ENCODE measurements at regions of chr14 and their contacts with region 1.

Region 1: GRCh38 chr14:74109369-74109768 is 24.6 kb downstream of the LIN52 start:
- DNase-seq: no peak
- H3K4me3 ChIP-seq: no peak overlapping the region
- H3K27ac ChIP-seq: no peak overlapping the region
- H3K4me1 ChIP-seq: no peaks in the 10 kb centered on the region
- H3K27me3 ChIP-seq: no peaks in the 10 kb centered on the region
- CTCF ChIP-seq: no peak

Region 2: DNA sequence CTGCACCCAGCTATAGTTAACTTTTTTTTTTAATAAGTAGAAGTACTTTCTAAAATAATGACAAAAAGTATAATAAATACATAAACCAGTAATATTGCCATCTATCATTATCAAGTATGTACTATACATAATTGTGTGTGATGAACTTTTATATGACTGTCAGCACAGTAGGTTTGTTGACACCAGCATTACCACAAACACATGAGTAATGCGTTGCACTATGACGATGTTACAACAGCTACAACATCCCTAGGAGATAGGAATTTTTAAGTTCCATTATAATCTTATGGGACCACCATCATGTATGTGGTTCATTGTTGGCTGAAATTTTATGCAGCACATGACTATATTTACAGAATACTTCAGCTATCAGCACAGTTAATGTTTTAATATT is 67.0 kb after region 1 on chr14:
- intact Hi-C with region 1: no loop called
- DNase-seq: no peak
- H3K4me3 ChIP-seq: no peak overlapping the region
- H3K27ac ChIP-seq: no peak overlapping the region
- H3K4me1 ChIP-seq: no peaks in the 10 kb centered on the region
- H3K27me3 ChIP-seq: no peaks in the 10 kb centered on the region
- CTCF ChIP-seq: no peak

Region 3: DNA sequence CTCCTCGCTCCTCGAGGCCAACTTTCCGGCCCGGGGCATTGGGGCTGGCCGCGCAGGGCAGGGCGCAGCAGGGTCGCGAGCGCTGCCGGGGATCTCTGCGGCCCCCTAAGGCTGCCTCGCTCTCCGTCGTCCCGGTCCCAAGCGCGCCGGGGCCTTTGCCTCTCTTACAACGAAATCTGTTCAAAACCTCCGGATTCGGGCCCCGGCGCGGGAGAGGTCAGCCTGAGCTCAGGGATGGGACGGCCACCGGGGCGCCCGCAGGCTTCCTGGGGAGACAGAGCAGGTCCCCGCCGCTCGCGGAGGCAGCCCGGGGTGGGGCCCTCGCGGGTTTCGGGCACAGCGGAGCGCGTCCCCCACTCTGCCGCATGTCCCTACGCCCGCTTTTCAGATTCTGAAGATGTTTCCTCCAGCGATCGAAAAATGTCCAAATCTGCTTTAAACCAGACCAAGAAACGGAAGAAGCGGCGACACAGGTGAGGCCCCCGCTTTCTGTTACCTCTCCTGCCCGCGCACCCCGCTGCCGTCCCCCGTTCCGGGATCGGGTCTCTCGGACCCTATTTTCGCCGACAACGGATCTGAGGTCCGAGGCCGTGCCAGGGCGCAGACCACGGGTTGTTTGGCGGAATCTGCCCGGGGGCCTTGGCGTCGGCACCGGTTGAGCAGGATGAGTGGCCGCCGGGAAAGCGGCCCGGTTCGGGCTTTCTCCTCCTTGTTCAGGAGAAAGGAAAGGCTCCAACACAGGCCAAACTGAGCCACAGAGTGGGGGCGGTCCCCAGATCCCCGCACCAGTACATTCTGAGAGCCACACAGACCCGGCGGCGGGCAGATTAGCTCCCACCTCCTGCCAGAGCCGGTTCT is 131.7 kb after region 1 on chr14:
- intact Hi-C with region 1: loop called (anchors 10 kb)
- DNase-seq: peak in 4 of 5 donors; percentile 52 to 60 (median 56)
- H3K4me3 ChIP-seq: peak overlapping the region in 1 of 3 donors; percentile 25
- H3K27ac ChIP-seq: no peak overlapping the region
- H3K4me1 ChIP-seq: peaks cover 0 to 8% (median 0%) of the 10 kb centered on the region in 3 donors
- H3K27me3 ChIP-seq: peaks cover 45% of the 10 kb centered on the region
- CTCF ChIP-seq: no peak

Region 4: GRCh38 chr14:74349757-74350156 is 240.4 kb after region 1 on chr14:
- intact Hi-C with region 1: no loop called
- DNase-seq: no peak
- H3K4me3 ChIP-seq: no peak overlapping the region
- H3K27ac ChIP-seq: no peak overlapping the region
- H3K4me1 ChIP-seq: no peaks in the 10 kb centered on the region
- H3K27me3 ChIP-seq: no peaks in the 10 kb centered on the region
- CTCF ChIP-seq: no peak

Measured in kidney (tissue), 22 donors.